ENCODE measurements at regions of chr15 and their contacts with region 1.

Region 1: DNA sequence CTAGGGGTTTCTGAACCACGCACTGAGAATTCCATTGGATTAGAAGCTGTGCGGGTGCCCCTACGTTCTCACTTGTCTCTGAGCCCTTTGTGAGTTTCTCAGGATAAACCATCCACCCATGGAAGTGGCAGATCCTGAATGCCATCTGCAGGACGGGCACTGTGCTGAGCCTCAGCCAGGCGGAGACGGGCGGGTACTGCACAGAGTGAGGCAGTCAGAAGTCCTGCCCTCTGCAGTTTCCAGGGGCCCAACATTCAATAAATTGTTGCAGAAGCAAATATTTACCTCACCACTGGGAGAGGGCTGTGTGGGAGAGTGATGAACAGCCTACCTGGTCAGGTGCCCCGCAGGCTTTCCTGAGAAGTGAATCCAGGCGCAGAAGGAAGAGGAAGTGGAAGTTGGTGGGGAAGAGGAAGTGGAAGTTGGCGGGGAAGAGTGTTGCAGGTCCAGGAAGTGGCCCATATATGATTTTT is 100.7 kb downstream of the SLCO3A1 start:
- DNase-seq: peak in 2 of 3 donors; percentile 18 to 62
- H3K4me3 ChIP-seq: no peak overlapping the region
- H3K4me3 Mint-ChIP-seq: no peak overlapping the region
- H3K27ac ChIP-seq: peak overlapping the region; percentile 19 to 51
- H3K27ac Mint-ChIP-seq: peak overlapping the region in 6 of 7 donors; percentile 64 to 90 (median 79)
- H3K4me1 ChIP-seq: peaks cover 49 to 58% of the 10 kb centered on the region in 2 donors
- H3K4me1 Mint-ChIP-seq: peaks cover 68% of the 10 kb centered on the region
- H3K27me3 ChIP-seq: no peaks in the 10 kb centered on the region
- H3K27me3 Mint-ChIP-seq: peaks cover 0 to 4% (median 3%) of the 10 kb centered on the region in 3 donors
- CTCF ChIP-seq: no peak

Region 2: GRCh38 chr15:91908391-91908790 is 45.8 kb before region 1 on chr15:
- intact Hi-C with region 1: loop called in 1 of 2 experiments (anchors 5 kb)
- DNase-seq: peak; percentile 29 to 74 (median 30)
- H3K4me3 ChIP-seq: no peak overlapping the region
- H3K4me3 Mint-ChIP-seq: no peak overlapping the region
- H3K27ac ChIP-seq: peak overlapping the region in 1 of 2 donors; percentile 37
- H3K27ac Mint-ChIP-seq: peak overlapping the region in 5 of 7 donors; percentile 2 to 66 (median 27)
- H3K4me1 ChIP-seq: peaks cover 14 to 19% of the 10 kb centered on the region in 2 donors
- H3K4me1 Mint-ChIP-seq: peaks cover 39% of the 10 kb centered on the region
- H3K27me3 ChIP-seq: no peaks in the 10 kb centered on the region
- H3K27me3 Mint-ChIP-seq: peaks cover 0 to 2% (median 1%) of the 10 kb centered on the region in 3 donors
- CTCF ChIP-seq: no peak

Region 3: DNA sequence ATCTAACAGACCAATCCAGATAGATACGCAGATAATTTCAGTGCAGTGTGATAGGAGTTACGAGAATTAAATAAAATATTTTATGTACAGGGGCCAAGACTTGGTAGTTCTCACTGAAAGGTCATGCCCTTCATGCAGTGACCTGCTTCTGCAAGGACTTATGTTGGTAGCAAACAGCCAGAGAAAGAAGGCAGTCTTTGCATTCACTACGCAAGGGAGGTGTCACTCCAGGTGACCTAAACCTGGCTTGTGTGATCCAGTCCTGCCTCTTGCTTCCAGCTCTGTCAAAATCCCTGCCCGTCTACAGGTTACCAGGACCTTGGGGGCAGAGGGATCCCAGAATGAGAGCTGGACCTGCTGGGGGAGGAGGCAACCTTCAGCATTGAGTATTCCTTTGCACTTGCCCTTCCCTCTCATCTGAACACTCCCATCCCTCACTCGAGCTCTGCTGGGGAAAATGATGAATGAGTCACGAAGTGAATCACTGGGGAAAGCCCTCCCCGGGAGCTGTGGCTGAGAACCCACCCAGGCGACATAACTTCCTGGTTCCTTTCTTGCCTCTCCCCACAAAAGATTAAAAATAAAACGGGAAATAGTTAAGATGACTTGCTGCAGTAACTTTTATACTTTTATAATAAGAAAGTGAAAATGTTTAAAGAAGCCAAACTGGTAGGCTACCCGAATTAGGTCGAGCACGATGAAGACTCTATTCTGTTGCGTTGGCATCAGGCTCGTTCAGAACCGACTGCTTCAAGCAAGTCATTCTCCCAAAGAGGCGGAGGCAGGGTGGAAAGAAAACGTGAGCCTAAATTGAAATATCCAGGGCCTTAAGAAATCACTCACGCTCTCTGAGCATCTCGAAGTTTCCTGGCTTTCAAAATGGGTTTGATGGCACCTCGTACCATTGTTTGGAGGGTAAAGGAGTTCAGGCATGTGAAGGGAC is 115.3 kb after region 1 on chr15:
- intact Hi-C with region 1: loop called (anchors 5 to 10 kb)
- DNase-seq: peak; percentile 92 to 98 (median 95)
- H3K4me3 ChIP-seq: peak overlapping the region; percentile 38 to 82 (median 76)
- H3K4me3 Mint-ChIP-seq: peak overlapping the region; percentile 79 to 89
- H3K27ac ChIP-seq: peak overlapping the region; percentile 79 to 97
- H3K27ac Mint-ChIP-seq: peak overlapping the region; percentile 91 to 99 (median 97)
- H3K4me1 ChIP-seq: peaks cover 56 to 62% of the 10 kb centered on the region in 2 donors
- H3K4me1 Mint-ChIP-seq: peaks cover 70% of the 10 kb centered on the region
- H3K27me3 ChIP-seq: no peaks in the 10 kb centered on the region
- H3K27me3 Mint-ChIP-seq: peaks cover 0 to 3% (median 2%) of the 10 kb centered on the region in 3 donors
- CTCF ChIP-seq: no peak

Region 4: GRCh38 chr15:92294759-92295158 is 340.5 kb after region 1 on chr15:
- intact Hi-C with region 1: no loop called
- DNase-seq: no peak
- H3K4me3 ChIP-seq: no peak overlapping the region
- H3K4me3 Mint-ChIP-seq: no peak overlapping the region
- H3K27ac ChIP-seq: no peak overlapping the region
- H3K27ac Mint-ChIP-seq: no peak overlapping the region
- H3K4me1 ChIP-seq: no peaks in the 10 kb centered on the region
- H3K4me1 Mint-ChIP-seq: no peaks in the 10 kb centered on the region
- H3K27me3 ChIP-seq: no peaks in the 10 kb centered on the region
- H3K27me3 Mint-ChIP-seq: peaks cover 0 to 11% (median 0%) of the 10 kb centered on the region in 3 donors
- CTCF ChIP-seq: no peak